ENCODE measurements at regions of chr6 and their contacts with region 1.

Region 1: GRCh38 chr6:109736273-109737025 is 45.4 kb downstream of the FIG4 start:
- DNase-seq: no peak
- H3K4me3 ChIP-seq: no peak overlapping the region
- H3K27ac ChIP-seq: no peak overlapping the region
- H3K4me1 ChIP-seq: no peaks in the 10 kb centered on the region
- H3K27me3 ChIP-seq: no peaks in the 10 kb centered on the region
- CTCF ChIP-seq: no peak

Region 2: DNA sequence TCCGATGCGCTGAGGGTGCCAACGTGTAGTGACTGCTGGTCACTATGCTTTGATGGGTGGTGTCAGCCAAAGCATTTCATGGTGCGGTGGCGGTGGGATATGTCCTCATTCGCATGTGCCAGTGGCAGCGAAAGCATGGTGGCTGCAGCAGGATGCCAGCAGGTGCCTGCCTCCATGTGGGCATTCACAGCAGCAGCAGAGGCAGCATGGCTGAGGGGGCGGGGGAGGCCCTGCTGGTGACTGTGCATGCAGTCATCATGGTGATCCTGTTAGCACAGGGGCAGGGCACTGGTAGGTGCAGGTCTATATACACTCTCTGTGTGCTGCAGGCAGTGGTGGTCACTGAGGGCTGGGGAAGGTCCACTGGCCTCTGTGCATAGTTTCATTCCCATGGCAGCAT is 23.4 kb before region 1 on chr6:
- CTCF ChIA-PET with region 1: no interaction called
- POLR2A ChIA-PET with region 1: no interaction called
- intact Hi-C with region 1: no loop called
- DNase-seq: no peak
- H3K4me3 ChIP-seq: no peak overlapping the region
- H3K27ac ChIP-seq: no peak overlapping the region
- H3K4me1 ChIP-seq: no peaks in the 10 kb centered on the region
- H3K27me3 ChIP-seq: no peaks in the 10 kb centered on the region
- CTCF ChIP-seq: no peak

Region 3: GRCh38 chr6:109867009-109867969 is 130.8 kb after region 1 on chr6:
- CTCF ChIA-PET with region 1: no interaction called
- POLR2A ChIA-PET with region 1: interaction called, 23 read pairs
- intact Hi-C with region 1: no loop called
- DNase-seq: no peak
- H3K4me3 ChIP-seq: no peak overlapping the region
- H3K27ac ChIP-seq: no peak overlapping the region
- H3K4me1 ChIP-seq: no peaks in the 10 kb centered on the region
- H3K27me3 ChIP-seq: no peaks in the 10 kb centered on the region
- CTCF ChIP-seq: no peak

Measured in PC-9 (cell line).